HCT116 (cell line): ENCODE measurements at regions of chr22 and their contacts with region 1.

Region 1: DNA sequence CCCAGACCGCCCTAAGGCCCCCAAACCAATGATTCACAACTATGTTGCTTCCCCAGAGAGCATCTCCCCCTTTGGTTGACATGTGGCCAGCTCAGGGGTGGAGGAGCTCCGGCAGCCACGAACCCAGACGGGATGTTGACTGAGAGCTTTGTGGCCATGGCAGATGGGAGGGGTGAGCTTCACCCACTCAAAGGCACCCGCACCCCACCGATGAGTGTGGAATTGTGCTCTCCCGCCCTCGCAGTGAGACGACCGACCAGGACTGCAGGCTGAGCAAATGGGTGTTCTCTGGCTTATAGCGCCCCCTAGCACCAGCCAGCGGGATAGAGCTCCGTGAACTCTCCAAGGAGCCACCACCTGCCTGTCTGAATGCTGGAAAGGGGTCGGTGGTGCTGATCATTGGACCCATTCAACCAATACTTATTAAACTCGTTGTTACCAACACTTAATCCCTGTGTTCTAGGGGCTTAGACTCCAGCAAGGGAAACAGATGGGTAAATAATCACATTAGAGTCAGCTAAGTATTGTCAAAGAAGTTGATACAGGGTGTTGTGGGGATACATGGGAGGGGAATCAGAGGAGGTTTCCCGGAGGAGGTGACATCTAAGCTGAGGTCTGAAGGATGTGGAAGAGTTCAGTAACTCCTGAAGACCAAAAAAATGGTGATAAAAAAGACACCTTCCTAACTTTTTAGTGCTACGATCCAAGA is 4.5 kb upstream of the TIMP3 start:
- DNase-seq: peak; percentile 46
- ATAC-seq: peak; percentile 91
- H3K4me3 ChIP-seq: no peak overlapping the region
- H3K27ac ChIP-seq: no peak overlapping the region
- H3K4me1 ChIP-seq: peaks cover 0 to 3% of the 10 kb centered on the region in 2 experiments; a peak in 1 of 4 replicates
- H3K27me3 ChIP-seq: peaks cover 5% of the 10 kb centered on the region; the same call in 1 of the 2 replicates
- CTCF ChIP-seq: peak; percentile 73 to 92 (median 90)
- POLR2A ChIP-seq: no peak
- RAD21 ChIP-seq: peak; percentile 86

Region 2: DNA sequence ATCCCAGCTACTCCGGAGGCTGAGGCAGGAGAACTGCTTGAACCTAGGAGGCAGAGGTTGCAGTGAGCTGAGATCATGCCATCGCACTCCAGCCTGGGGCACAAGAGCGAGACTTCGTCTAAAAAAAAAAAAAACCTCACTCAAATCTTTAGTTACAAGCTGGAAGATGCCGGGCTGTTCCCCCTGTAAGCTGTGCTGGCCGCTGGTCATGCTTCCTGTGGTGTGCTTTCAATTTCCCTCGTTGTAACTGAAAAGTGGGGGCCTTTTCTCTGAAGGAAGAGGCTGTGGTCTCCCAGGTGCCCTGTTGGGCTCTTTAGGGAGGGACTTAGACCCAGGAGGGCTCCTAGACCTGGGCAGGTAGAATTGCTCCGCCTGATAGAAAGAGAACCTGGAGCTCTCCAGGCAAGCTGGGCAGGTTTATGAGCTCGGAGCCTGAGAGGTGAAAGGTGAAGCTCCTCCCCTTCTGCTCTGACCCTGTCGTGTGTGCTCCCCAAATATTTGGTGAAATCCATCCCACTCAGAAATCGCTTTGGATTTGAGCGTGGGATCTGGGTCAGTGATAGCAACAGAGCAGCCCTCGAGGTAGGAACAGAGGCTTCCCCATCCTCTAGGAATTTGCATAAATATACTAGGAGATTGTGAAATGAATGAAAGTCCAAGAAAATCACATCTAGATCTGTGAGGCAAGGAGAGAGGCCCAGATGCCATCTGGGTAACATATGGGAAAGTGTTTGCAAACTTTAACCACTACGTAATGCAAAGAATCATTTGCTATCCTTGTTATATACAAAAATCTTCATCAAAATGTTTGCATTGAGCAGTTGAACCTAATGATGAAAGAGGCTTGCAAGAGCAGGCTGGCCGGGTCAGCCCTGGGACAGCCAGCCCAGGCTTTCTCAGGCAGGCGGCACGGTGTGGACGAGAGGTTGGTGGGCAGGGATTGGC is 168.1 kb before region 1 on chr22:
- CTCF ChIA-PET with region 1: interaction called, 34 read pairs
- POLR2A ChIA-PET with region 1: no interaction called
- RAD21 ChIA-PET with region 1: no interaction called
- intact Hi-C with region 1: no loop called
- DNase-seq: no peak
- ATAC-seq: no peak
- H3K4me3 ChIP-seq: no peak overlapping the region
- H3K27ac ChIP-seq: no peak overlapping the region
- H3K4me1 ChIP-seq: no peaks in the 10 kb centered on the region
- H3K27me3 ChIP-seq: no peaks in the 10 kb centered on the region
- CTCF ChIP-seq: no peak
- POLR2A ChIP-seq: no peak
- RAD21 ChIP-seq: no peak

Region 3: GRCh38 chr22:32745251-32745995 is 51.6 kb before region 1 on chr22:
- CTCF ChIA-PET with region 1: interaction called, 3 read pairs
- POLR2A ChIA-PET with region 1: interaction called, 3 read pairs
- RAD21 ChIA-PET with region 1: no interaction called
- intact Hi-C with region 1: loop called (anchors 10 kb)
- DNase-seq: peak; percentile 70
- ATAC-seq: peak; percentile 96
- H3K4me3 ChIP-seq: peak overlapping the region; percentile 33 to 53
- H3K27ac ChIP-seq: peak overlapping the region; percentile 76
- H3K4me1 ChIP-seq: peaks cover 21 to 29% of the 10 kb centered on the region in 2 experiments
- H3K27me3 ChIP-seq: no peaks in the 10 kb centered on the region
- CTCF ChIP-seq: no peak
- POLR2A ChIP-seq: no peak
- RAD21 ChIP-seq: no peak

Region 4: DNA sequence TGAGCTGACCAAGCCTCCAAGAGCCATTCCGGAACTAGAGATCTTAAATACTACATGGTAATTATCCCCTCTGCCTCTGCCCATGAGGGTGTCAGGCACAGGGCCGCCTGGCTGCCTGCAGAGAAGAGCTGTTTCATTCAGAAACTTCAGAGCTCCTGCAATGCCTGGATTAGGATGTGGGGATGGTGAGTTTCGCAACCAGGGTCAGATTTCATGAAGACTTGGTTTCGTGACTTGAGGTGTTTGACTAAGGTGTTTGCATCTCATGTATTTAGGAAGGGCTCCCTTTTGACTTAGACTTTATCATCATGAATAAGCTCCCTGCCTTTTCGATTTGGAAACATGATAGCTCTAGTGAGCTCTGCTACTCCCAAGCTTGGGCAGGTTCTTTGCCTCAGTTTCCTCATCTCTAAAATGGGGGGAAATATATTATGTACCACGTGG is 13.6 kb after region 1 on chr22:
- CTCF ChIA-PET with region 1: interaction called, 13 read pairs
- POLR2A ChIA-PET with region 1: no interaction called
- RAD21 ChIA-PET with region 1: no interaction called
- intact Hi-C with region 1: no loop called
- DNase-seq: no peak
- ATAC-seq: no peak
- H3K4me3 ChIP-seq: no peak overlapping the region
- H3K27ac ChIP-seq: no peak overlapping the region
- H3K4me1 ChIP-seq: no peaks in the 10 kb centered on the region
- H3K27me3 ChIP-seq: peaks cover 15% of the 10 kb centered on the region; the same call in 1 of the 2 replicates
- CTCF ChIP-seq: no peak
- POLR2A ChIP-seq: no peak
- RAD21 ChIP-seq: no peak